ENCODE measurements at regions of chr11 and their contacts with region 1.

Region 1: GRCh38 chr11:64778508-64779346 is at the start of gene SF1:
- DNase-seq: peak; percentile 100
- H3K4me3 Mint-ChIP-seq: peak within 1 kb of the TSS; percentile 92
- H3K27ac Mint-ChIP-seq: peak within 1 kb of the TSS; percentile 99
- H3K4me1 Mint-ChIP-seq: peaks cover 52% of the 10 kb centered on the region
- H3K27me3 Mint-ChIP-seq: no peaks in the 10 kb centered on the region
- total RNA-seq, gene SF1: 303 to 320 TPM

Region 2: GRCh38 chr11:64341851-64342791 is 436.6 kb before region 1 on chr11:
- CTCF ChIA-PET with region 1: no interaction called
- intact Hi-C with region 1: loop called (anchors 5 kb)
- DNase-seq: peak; percentile 95
- H3K4me3 Mint-ChIP-seq: peak overlapping the region; percentile 18
- H3K27ac Mint-ChIP-seq: no peak overlapping the region
- H3K4me1 Mint-ChIP-seq: peaks cover 34% of the 10 kb centered on the region
- H3K27me3 Mint-ChIP-seq: no peaks in the 10 kb centered on the region

Region 3: GRCh38 chr11:64803163-64803845 is 24.6 kb after region 1 on chr11 and contains the start of gene MAP4K2:
- CTCF ChIA-PET with region 1: interaction called, 5 read pairs
- intact Hi-C with region 1: loop called (anchors 2 kb)
- DNase-seq: peak; percentile 88
- H3K4me3 Mint-ChIP-seq: peak within 1 kb of the TSS; percentile 81
- H3K27ac Mint-ChIP-seq: peak within 1 kb of the TSS; percentile 89
- H3K4me1 Mint-ChIP-seq: peaks cover 31% of the 10 kb centered on the region
- H3K27me3 Mint-ChIP-seq: no peaks in the 10 kb centered on the region
- total RNA-seq, gene MAP4K2: 69.5 to 73.9 TPM

Region 4: DNA sequence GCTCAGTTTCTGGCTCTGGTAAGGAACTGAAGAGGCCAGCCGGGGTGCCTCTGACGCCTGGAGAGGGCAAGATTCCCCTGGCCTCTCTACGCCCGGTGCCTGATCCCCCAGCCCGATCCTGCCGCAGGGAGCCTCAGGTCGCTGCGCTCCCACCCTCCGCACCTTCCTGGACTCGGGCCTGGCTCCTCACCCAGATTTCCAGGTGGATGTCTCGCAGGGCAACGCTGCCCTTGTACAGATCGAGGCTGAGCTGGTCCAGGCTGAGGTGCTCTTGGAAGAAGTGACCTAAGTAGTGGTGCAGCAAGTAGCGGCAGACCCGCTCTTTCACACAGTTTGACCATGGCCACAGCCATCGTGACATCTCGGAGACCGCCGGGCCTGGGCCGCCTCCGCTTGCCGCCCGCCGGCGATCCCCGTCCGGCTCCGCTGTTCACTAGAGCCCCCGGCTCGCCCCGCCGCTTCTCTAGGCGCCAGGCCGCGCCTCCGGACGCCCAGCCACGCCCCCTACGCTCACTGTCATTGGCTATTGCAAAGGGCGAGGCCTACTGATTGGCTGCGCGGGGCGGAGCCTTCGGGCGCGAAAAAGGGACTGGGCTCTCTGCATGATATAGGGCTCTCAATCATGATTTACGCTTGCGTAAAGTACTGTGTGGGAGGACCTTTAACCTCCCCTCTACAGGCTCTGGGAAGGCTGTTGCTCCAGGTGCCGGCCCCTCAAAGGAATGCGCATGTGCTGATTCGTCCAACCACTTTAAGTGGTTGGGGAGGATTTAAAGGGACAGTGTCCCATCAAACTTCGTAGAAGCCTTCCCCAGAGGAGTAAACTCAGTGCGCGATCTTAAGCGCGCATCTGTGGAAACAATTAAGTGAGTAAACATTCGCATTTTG is 138.3 kb after region 1 on chr11 and contains the start of gene ATG2A:
- CTCF ChIA-PET with region 1: no interaction called
- intact Hi-C with region 1: loop called (anchors 2 kb)
- DNase-seq: peak; percentile 99
- H3K4me3 Mint-ChIP-seq: peak within 1 kb of the TSS; percentile 87
- H3K27ac Mint-ChIP-seq: peak within 1 kb of the TSS; percentile 81
- H3K4me1 Mint-ChIP-seq: peaks cover 25% of the 10 kb centered on the region
- H3K27me3 Mint-ChIP-seq: no peaks in the 10 kb centered on the region
- total RNA-seq, gene ATG2A: 15.1 to 16.3 TPM

Region 5: DNA sequence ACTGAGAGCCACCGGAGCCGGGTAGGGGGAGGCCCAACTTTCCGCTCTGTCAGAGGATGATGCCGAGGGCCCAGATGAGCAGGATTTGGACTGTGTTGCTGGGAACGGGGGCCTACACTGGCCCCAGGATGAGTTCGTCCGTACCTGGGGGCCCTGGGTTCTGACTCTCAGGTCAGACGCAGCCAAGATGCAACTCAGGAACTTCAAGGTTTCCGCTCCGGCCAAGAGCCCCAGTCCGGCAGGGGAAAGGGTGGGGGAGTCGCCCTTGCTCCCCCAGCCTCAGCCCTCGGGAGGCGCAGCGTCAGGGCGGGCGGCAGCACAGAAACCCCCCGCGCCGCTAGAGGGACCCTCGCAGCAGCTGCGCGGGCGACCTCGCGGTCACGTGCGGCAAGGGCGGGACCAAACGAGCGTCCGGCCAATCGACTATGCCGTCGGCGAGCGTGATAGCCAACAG is 235.0 kb after region 1 on chr11:
- CTCF ChIA-PET with region 1: interaction called, 4 read pairs
- intact Hi-C with region 1: loop called (anchors 5 kb)
- DNase-seq: peak; percentile 87
- H3K4me3 Mint-ChIP-seq: peak overlapping the region; percentile 85
- H3K27ac Mint-ChIP-seq: peak overlapping the region; percentile 96
- H3K4me1 Mint-ChIP-seq: peaks cover 27% of the 10 kb centered on the region
- H3K27me3 Mint-ChIP-seq: no peaks in the 10 kb centered on the region

Region 6: DNA sequence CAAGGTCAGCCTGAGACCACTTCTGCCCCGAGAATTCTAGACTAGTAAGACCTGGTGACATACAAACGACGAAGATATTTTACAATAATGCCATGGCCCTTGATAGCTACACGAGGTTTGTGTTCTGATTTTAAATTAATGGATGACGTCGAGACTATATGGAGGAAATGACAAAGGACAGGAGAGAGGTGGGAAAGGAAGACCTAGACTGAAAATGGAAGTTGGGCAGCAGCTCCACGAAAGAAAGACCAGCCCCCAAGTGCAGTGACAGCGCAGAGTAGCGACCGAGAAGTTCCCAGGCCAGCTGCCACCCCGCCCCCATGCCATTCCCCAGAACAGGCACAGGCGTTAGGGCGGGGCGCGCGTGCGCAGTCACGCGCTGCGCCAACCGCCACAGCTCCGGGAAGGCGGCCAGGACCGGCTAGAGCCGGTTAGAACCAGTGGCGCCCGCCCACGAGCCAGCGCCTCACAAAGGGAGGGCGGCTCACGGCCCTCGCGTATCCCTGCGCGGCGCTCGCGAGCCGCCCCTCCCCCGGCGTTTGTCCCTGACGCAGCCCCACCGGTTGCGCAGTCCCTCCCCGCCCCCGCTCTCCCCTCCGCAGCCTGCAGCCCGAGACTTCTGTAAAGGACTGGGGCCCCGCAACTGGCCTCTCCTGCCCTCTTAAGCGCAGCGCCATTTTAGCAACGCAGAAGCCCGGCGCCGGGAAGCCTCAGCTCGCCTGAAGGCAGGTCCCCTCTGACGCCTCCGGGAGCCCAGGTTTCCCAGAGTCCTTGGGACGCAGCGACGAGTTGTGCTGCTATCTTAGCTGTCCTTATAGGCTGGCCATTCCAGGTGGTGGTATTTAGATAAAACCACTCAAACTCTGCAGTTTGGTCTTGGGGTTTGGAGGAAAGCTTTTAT is 718.7 kb after region 1 on chr11:
- CTCF ChIA-PET with region 1: no interaction called
- intact Hi-C with region 1: loop called (anchors 5 kb)
- DNase-seq: peak; percentile 99
- H3K4me3 Mint-ChIP-seq: no peak overlapping the region
- H3K27ac Mint-ChIP-seq: no peak overlapping the region
- H3K4me1 Mint-ChIP-seq: peaks cover 37% of the 10 kb centered on the region
- H3K27me3 Mint-ChIP-seq: no peaks in the 10 kb centered on the region

Measured in activated naive CD4-positive, alpha-beta T cell treated with anti-CD3 and anti-CD28 coated beads for 36 hours (primary cell).